ENCODE measurements at regions of chr2 and their contacts with region 1.

Region 1: GRCh38 chr2:186641807-186642321 is 52.0 kb upstream of the FAM171B start:
- DNase-seq: no peak
- H3K4me3 ChIP-seq: no peak overlapping the region
- H3K27ac ChIP-seq: no peak overlapping the region
- H3K4me1 ChIP-seq: no peaks in the 10 kb centered on the region
- H3K27me3 ChIP-seq: no peaks in the 10 kb centered on the region
- CTCF ChIP-seq: peak in 2 of 3 experiments; percentile 65 to 78; a peak in 3 of 4 replicates
- EP300 ChIP-seq: no peak
- POLR2A ChIP-seq: no peak
- RAD21 ChIP-seq: peak; percentile 92

Region 2: GRCh38 chr2:186496401-186496800 is 145.5 kb before region 1 on chr2:
- CTCF ChIA-PET with region 1: interaction called, 111 read pairs
- POLR2A ChIA-PET with region 1: no interaction called
- DNase-seq: no peak
- H3K4me3 ChIP-seq: no peak overlapping the region
- H3K27ac ChIP-seq: no peak overlapping the region
- H3K4me1 ChIP-seq: no peaks in the 10 kb centered on the region
- H3K27me3 ChIP-seq: no peaks in the 10 kb centered on the region
- CTCF ChIP-seq: no peak
- EP300 ChIP-seq: no peak
- POLR2A ChIP-seq: no peak
- RAD21 ChIP-seq: no peak

Region 3: DNA sequence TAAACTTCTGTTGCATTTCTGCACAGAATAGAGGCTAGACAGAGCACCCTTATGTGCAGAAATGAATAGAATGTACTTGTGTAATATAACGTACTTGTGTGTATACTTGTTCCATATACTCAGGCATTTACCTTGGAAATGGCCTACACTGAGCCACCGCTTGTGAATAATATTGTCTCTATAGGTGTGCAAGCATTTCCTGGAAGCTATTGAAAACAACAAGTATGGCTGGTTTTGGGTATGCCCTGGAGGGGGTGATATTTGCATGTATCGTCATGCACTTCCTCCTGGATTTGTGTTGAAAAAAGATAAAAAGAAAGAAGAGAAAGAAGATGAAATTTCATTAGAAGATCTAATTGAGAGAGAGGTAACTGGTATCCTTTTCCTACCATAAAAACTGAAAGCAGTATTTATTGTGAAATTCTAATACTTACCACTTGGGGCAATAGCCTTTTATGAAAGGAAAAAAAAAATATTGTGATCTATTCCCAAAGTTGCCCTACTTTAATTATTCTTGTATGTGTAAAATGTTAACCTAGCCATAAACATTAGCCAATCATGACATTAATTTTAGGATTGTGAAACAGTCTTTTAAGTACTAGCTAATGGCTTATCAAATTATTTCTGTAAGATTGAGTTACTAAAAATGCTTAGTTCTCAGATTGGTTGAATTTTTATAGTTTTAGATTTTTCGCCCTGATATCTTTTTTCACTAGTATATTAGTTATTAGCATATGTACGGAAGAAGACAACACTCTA is 137.8 kb before region 1 on chr2:
- CTCF ChIA-PET with region 1: interaction called, 111 read pairs
- POLR2A ChIA-PET with region 1: interaction called, 3 read pairs
- DNase-seq: no peak
- H3K4me3 ChIP-seq: no peak overlapping the region
- H3K27ac ChIP-seq: no peak overlapping the region
- H3K4me1 ChIP-seq: no peaks in the 10 kb centered on the region
- H3K27me3 ChIP-seq: no peaks in the 10 kb centered on the region
- CTCF ChIP-seq: no peak; a peak in 1 of 4 replicates
- EP300 ChIP-seq: no peak
- POLR2A ChIP-seq: no peak
- RAD21 ChIP-seq: peak in 1 of 2 experiments; percentile 58; a peak in 3 of 4 replicates

Region 4: DNA sequence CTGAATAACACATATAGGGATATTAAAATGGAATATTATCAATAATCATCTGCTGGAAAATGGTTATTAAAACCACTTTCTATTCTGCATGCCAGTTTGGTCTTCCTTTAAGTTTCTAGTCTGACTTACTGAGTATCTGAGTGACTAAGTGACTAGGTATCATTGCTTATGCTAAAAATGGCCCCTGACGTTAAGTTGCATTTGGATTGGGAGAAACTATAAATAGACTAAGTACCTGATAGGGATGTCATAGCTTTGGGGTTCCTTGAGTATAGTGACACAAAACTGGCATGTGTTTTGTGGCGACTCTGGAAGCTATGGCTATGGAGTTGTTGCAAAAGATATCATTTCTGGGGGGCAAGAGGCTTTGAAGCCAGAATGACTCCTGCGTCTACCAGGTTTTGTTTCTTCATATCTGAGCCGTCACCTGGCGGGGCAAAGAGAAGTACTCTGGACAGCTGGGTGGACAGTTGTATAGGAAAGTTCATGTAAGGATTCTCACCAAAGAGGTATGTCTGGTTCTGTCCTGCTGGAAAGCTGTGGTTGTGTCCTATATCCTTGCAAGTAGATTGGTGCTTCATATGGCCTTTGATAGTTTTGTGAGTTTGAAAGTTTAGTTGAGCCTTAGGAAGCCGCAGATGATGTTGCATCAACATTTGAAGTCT is 34.1 kb before region 1 on chr2:
- CTCF ChIA-PET with region 1: interaction called, 17 read pairs
- POLR2A ChIA-PET with region 1: no interaction called
- DNase-seq: no peak
- H3K4me3 ChIP-seq: no peak overlapping the region
- H3K27ac ChIP-seq: no peak overlapping the region
- H3K4me1 ChIP-seq: peaks cover 0 to 6% (median 2%) of the 10 kb centered on the region in 4 experiments; a peak in 1 of 7 replicates
- H3K27me3 ChIP-seq: no peaks in the 10 kb centered on the region
- CTCF ChIP-seq: no peak
- EP300 ChIP-seq: no peak
- POLR2A ChIP-seq: no peak
- RAD21 ChIP-seq: no peak

Region 5: DNA sequence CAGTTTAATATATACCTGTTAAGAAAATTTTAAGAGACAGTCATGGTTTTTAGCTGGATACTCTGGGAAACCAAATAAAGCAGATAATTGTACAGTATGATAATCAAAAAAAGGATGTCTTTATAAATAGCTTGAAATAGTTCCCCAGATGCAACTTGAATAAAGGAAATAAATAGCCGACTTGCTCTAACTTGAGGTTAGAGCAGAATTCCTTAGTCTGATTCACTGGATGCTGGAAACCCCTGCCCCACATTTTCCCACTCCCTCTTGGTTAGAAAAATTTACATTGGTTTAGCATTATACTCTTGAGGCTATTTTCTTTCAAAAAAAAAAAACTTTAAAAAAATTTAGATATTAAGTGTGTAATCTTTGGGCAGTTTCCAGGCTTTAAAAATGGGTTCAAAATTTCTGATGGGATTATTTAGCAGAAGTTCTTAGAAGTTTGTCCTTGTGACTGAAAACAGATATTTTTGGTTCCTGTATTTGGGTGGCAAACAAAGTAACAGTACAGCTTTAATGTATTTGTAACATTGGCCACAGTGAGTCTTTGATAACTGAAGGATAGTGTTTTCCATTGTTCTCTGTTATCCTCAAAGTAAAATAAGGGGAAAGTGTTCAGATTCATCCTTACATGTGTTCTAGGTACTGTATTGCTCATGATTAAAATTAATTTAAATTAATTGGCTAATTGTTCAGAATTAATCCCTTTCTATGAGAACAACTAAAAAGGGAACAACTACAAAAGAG is 12.4 kb before region 1 on chr2:
- CTCF ChIA-PET with region 1: interaction called, 31 read pairs
- POLR2A ChIA-PET with region 1: no interaction called
- DNase-seq: no peak
- H3K4me3 ChIP-seq: no peak overlapping the region
- H3K27ac ChIP-seq: no peak overlapping the region
- H3K4me1 ChIP-seq: 0 out of 7 replicates have a peak, but pooled peaks cover 0 to 2% (median 0%) of the 10 kb centered on the region in 4 experiments
- H3K27me3 ChIP-seq: no peaks in the 10 kb centered on the region
- CTCF ChIP-seq: no peak
- EP300 ChIP-seq: no peak
- POLR2A ChIP-seq: no peak
- RAD21 ChIP-seq: no peak

Region 6: DNA sequence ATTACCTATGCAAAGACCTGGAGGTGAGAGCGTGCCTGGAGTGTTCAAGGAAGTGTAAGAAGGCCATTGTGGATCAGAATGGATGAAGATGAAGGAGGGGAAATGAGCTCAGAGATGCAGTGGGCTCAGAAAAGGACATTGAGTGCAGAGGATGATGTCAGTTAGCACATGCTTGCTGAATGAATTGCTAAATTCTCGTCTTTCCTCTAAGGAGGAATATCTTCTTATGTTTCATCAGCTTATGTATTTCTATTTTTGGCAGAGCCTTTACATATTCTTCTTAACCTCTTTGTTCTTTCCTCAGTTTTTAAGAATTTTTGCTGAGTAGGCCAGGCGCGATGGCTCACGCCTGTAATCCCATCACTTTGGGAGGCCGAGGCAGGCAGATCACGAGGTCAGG is 82.9 kb after region 1 on chr2:
- CTCF ChIA-PET with region 1: no interaction called
- POLR2A ChIA-PET with region 1: no interaction called
- DNase-seq: no peak
- H3K4me3 ChIP-seq: no peak overlapping the region
- H3K27ac ChIP-seq: no peak overlapping the region
- H3K4me1 ChIP-seq: peaks cover 0 to 2% (median 0%) of the 10 kb centered on the region in 4 experiments; a peak in 1 of 7 replicates
- H3K27me3 ChIP-seq: no peaks in the 10 kb centered on the region
- CTCF ChIP-seq: no peak
- EP300 ChIP-seq: no peak
- POLR2A ChIP-seq: no peak
- RAD21 ChIP-seq: no peak

Region 7: DNA sequence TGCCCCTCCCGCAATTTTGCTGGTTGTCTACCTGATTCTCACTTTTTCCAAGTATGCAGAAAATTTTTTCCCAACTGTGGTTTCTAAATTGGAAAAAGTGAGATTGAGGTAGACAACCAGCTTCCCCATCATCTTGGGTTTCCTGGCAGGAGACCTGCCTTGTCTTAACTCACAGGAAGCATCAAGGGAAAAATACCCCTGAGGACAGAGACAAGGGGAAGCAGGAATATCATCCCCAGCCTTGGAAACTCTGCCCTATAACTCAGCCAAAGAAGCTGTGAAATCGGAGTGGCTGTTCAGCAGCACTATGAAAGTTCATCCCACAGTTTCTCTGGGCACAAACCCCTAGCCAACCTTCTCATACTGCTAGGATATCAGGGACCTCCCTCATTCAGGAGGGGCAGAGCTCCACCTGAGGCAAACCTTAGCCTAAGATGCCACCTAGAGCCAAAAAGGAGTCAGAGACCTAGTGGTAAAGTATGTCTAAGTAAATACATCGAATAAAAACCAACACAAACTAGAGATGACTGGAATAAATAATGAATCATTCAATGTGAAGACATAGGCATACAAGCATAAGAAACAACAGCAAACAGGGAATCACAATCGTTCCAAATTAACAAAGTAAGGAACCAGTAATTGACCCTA is 139.0 kb after region 1 on chr2:
- CTCF ChIA-PET with region 1: interaction called, 34 read pairs
- POLR2A ChIA-PET with region 1: no interaction called
- DNase-seq: peak in 1 of 2 experiments; percentile 43
- H3K4me3 ChIP-seq: no peak overlapping the region
- H3K27ac ChIP-seq: no peak overlapping the region
- H3K4me1 ChIP-seq: no peaks in the 10 kb centered on the region
- H3K27me3 ChIP-seq: no peaks in the 10 kb centered on the region
- CTCF ChIP-seq: peak; percentile 26 to 85 (median 81)
- EP300 ChIP-seq: no peak
- POLR2A ChIP-seq: no peak
- RAD21 ChIP-seq: peak; percentile 99

Region 8: GRCh38 chr2:186806591-186806990 is 164.7 kb after region 1 on chr2:
- CTCF ChIA-PET with region 1: no interaction called
- POLR2A ChIA-PET with region 1: no interaction called
- DNase-seq: no peak
- H3K4me3 ChIP-seq: no peak overlapping the region
- H3K27ac ChIP-seq: no peak overlapping the region
- H3K4me1 ChIP-seq: peaks cover 0 to 2% (median 0%) of the 10 kb centered on the region in 4 experiments; a peak in 1 of 7 replicates
- H3K27me3 ChIP-seq: no peaks in the 10 kb centered on the region
- CTCF ChIP-seq: no peak
- EP300 ChIP-seq: no peak
- POLR2A ChIP-seq: no peak
- RAD21 ChIP-seq: no peak

Measured in H1 (cell line).